Panc1 (cell line): ENCODE measurements at regions of chr2 and their contacts with region 1.

Region 1: GRCh38 chr2:156486147-156486546 is 50.0 kb downstream of the GPD2 start:
- DNase-seq: no peak
- ATAC-seq: no peak
- H3K4me3 ChIP-seq: no peak overlapping the region
- H3K27ac ChIP-seq: no peak overlapping the region
- H3K4me1 ChIP-seq: no peaks in the 10 kb centered on the region
- H3K27me3 ChIP-seq: no peaks in the 10 kb centered on the region
- CTCF ChIP-seq: no peak

Region 2: DNA sequence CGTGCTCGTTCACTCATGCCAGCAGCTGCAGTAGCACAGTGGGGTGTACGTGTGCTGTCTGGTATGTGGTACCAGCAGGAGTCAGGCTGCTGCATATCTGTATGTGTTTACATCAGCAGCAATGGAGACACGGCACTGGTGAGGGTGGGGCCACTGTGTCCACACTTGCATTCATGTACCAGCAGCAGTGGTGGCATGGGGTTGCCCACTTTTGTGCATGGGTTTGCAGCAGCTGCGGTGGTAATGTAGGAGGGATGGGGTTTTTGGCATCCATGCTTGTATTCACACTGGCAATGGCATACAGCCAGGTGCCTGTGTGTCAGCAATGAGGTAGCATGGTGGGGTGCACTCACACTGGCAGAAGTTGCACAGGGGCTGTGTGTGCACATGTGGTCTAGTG is 1599.8 kb before region 1 on chr2:
- CTCF ChIA-PET with region 1: no interaction called
- POLR2A ChIA-PET with region 1: no interaction called
- in situ Hi-C with region 1: no loop called
- intact Hi-C with region 1: no loop called
- DNase-seq: no peak
- ATAC-seq: no peak
- H3K4me3 ChIP-seq: no peak overlapping the region
- H3K27ac ChIP-seq: no peak overlapping the region
- H3K4me1 ChIP-seq: no peaks in the 10 kb centered on the region
- H3K27me3 ChIP-seq: no peaks in the 10 kb centered on the region
- CTCF ChIP-seq: no peak

Region 3: DNA sequence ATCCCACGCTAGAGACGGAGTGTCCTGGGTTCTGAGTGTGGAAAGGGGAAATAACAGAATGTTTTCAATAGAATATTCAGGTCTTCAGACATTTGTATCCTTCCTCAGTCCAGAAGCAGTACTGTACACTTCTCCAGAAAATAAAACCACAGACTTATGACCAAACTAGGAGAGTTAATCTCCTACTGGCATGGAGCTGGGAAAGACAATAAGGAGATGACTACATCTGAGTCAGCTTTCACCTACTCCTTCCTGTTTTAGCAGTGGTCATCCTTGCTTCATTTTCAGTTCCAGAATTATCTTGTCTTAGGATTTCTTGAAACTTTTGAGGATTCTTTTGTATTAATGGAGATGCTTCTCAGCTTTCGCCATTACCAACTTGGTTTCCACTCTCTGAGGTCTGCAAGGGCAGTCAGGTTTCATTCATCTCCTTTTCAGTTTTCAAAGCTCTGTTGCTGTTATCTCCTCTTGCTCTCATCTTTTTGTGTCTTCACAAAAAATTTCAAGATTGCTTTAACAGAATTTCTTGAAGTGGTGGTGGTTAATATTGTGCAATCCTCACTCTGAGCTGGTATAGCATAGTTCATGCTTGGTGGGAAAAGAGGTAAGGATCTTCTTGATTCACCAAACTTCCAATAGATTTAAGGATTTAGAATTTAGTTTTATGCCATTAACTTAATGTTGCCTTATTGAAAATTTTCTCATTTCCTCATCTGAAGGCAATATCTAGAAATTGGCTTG is 130.0 kb before region 1 on chr2:
- CTCF ChIA-PET with region 1: no interaction called
- POLR2A ChIA-PET with region 1: interaction called, 16 read pairs
- in situ Hi-C with region 1: no loop called
- intact Hi-C with region 1: no loop called
- DNase-seq: no peak
- ATAC-seq: no peak
- H3K4me3 ChIP-seq: no peak overlapping the region
- H3K27ac ChIP-seq: no peak overlapping the region
- H3K4me1 ChIP-seq: no peaks in the 10 kb centered on the region
- H3K27me3 ChIP-seq: peaks cover 12% of the 10 kb centered on the region; the same call in 1 of the 2 replicates
- CTCF ChIP-seq: no peak

Region 4: DNA sequence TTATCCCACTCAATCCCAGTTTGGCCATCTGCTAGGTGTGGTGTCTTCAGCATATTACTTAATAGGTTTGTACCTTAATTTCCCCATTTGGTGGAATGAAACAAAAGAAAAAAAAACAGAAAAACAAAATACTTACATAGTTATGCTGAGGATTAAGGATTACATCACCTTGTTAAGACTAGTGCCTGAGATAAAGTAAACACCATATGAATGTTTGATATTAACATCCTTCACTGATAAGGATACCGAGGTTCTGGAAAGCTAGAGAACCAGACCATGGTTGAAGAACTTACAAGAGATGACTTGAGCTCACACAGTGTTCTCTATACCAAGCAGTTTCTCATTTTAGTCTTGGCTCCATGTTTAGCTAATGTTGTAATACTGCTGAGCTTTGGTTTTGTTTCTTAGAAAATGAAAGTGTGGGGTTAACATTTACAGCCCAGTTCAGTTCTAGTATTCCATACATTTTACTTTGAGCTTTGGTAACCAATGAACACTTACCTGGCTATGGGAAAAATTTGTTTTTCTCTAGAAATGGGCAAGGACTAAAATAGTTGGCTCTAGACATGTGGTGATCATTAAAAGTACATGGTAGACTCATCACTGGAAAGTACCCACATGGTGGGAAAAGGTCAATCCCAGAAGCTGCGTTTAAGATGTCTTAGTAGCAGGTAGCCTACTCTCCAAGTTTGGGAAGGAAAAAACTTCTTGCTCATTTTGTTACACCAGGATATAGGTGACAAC is 55.7 kb before region 1 on chr2:
- CTCF ChIA-PET with region 1: no interaction called
- POLR2A ChIA-PET with region 1: no interaction called
- in situ Hi-C with region 1: no loop called
- intact Hi-C with region 1: no loop called
- DNase-seq: no peak
- ATAC-seq: no peak
- H3K4me3 ChIP-seq: no peak overlapping the region
- H3K27ac ChIP-seq: no peak overlapping the region; the same call in 1 of the 2 replicates
- H3K4me1 ChIP-seq: peaks cover 9% of the 10 kb centered on the region
- H3K27me3 ChIP-seq: no peaks in the 10 kb centered on the region
- CTCF ChIP-seq: no peak

Region 5: DNA sequence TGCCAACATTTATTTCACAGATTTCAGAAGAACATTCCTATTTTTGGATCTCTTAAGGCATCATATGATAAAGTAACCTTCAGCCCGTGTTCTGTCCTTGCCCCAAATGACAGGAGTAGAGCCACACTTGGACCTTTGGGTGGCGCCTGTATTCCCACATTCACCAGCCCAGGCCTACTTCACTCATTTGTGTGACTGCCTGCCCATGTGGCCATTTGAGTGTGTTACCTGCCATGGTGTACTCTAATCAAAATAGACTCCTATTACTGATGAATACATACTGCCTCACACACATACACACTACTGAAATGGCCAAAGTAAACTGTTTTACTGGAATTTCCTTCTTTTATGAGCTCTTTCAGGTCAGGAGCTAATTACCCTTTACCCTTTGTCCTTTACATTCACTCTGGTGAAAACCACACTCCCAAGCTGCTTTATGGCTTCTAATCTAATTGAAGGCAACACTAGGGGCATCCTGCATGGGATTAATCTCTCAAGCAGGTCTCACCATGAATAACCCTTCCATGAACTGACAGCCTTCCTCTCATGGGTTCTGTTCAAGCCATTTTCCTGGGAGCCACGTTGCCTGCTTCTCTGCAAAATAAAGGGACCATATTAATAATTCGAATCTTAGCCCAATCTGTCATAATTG is 500.3 kb after region 1 on chr2:
- CTCF ChIA-PET with region 1: no interaction called
- POLR2A ChIA-PET with region 1: interaction called, 11 read pairs
- in situ Hi-C with region 1: no loop called
- intact Hi-C with region 1: no loop called
- DNase-seq: no peak
- ATAC-seq: no peak
- H3K4me3 ChIP-seq: no peak overlapping the region
- H3K27ac ChIP-seq: no peak overlapping the region
- H3K4me1 ChIP-seq: no peaks in the 10 kb centered on the region
- H3K27me3 ChIP-seq: no peaks in the 10 kb centered on the region
- CTCF ChIP-seq: no peak